ENCODE measurements at regions of chr5 and their contacts with region 1.

Region 1: DNA sequence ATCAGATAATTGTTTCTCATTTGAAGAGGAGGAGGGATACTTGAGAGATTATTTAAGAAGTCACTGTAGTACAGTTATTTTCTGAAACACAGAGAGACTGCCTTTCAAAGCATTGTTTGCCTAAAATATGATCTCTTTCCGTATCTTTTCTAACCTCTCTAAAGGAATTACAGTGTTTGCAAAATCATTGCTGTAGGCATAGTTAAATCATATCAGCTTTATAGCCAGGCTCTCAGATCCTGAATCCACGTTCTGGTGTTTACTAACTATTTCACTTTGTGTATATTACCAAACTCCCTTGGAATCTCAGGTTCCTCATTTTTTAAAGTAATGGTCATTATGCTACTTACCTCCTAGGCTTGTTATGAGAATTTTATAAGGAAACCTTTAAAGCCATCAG is 1151.6 kb upstream of the CDH9 start:
- DNase-seq: no peak
- H3K4me3 Mint-ChIP-seq: no peak overlapping the region
- H3K27ac Mint-ChIP-seq: no peak overlapping the region
- H3K4me1 Mint-ChIP-seq: no peaks in the 10 kb centered on the region
- H3K27me3 Mint-ChIP-seq: no peaks in the 10 kb centered on the region

Region 2: DNA sequence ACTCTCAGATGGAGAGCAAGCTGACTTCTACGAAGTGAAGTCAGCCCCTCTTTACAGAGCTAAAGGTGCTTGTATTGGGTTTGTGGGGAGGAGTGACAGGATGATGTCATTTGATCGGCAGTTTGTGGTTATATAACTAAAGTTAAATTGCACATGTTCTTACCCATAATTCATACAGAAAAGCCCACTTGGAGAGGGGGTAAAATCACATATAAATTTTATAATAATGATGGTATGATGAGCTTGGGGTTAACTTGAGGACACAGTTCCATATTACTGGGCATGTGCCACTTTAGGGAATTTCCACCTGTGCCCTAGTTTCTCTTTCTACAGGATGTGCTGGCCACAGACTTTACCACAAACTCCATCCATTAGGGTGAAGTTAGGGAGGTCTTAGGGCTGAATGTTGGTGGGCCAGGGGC is 26.9 kb after region 1 on chr5:
- intact Hi-C with region 1: loop called (anchors 1 kb)
- DNase-seq: no peak
- H3K4me3 Mint-ChIP-seq: no peak overlapping the region
- H3K27ac Mint-ChIP-seq: no peak overlapping the region
- H3K4me1 Mint-ChIP-seq: no peaks in the 10 kb centered on the region
- H3K27me3 Mint-ChIP-seq: no peaks in the 10 kb centered on the region

Measured in activated T-helper 1 cell treated with anti-CD3 and anti-CD28 coated beads, Interleukin-12 subunit alpha, Interleukin-12 subunit beta, Interleukin-2, Interleukin-4 antibody, amounts not matched to agents 30 ng/mL and 10 ng/mL and 1 ng/mL, durations not matched to agents 14 hours and 24 hours and 36 hours (primary cell).